ENCODE measurements at regions of chr2 and their contacts with region 1.

Region 1: DNA sequence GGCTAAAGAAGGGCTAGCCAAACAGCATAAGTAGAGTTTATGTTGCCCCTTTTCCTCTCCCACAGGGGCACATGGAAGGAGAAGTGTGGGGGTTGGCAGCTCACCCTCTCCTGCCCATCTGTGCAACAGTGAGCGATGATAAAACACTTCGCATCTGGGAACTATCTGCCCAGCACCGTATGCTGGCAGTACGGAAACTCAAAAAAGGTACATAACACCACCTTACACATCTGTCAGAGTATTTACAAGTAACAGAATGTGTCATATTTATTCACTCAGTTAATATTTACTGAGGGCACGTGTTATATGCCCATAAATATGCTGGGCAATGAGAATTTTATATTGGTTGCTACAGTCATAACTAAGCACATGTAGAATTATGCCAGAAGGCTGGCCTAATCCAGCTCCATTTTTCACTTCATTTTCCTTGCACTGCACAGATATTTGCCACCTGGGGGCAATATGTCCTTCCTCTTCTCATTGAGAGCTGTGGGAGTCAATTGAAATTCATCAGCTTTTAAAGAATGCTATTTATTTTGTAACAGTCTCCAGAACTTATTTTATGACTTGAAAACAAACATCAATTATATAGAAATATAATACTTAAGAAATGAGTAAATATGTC is 150.6 kb downstream of the RTN4 start:
- DNase-seq: peak; percentile 48
- H3K4me3 ChIP-seq: no peak overlapping the region
- H3K27ac ChIP-seq: no peak overlapping the region
- H3K4me1 ChIP-seq: peaks cover 10% of the 10 kb centered on the region
- H3K27me3 ChIP-seq: peaks cover 5 to 6% of the 10 kb centered on the region in 2 experiments
- CTCF ChIP-seq: peak; percentile 31 to 34
- POLR2A ChIP-seq: no peak

Region 2: GRCh38 chr2:54960164-54960563 is 60.5 kb after region 1 on chr2:
- CTCF ChIA-PET with region 1: interaction called, 14 read pairs
- POLR2A ChIA-PET with region 1: no interaction called
- dilution Hi-C with region 1: no loop called
- intact Hi-C with region 1: no loop called
- DNase-seq: no peak
- H3K4me3 ChIP-seq: no peak overlapping the region
- H3K27ac ChIP-seq: no peak overlapping the region
- H3K4me1 ChIP-seq: no peaks in the 10 kb centered on the region
- H3K27me3 ChIP-seq: no peaks in the 10 kb centered on the region
- CTCF ChIP-seq: no peak
- POLR2A ChIP-seq: no peak

Region 3: DNA sequence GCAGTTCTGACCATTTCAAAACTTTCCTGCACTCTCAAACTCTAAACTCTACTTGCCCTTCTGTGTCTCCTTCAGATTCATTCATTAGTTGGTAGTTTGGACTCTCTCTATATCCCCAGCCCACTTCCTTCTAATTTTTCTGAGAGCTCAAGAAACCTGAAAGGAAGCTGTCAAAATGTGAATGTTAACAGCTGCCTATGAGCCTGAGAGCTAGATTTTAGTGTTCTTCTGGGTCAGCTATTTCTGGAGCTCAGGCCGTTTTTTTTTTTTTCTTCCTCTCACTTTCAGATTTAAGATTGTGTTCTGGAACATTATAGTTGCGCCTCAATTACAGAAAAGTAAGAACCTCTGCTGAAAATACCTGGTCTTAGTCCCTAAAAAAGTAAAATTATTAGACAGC is 77.5 kb after region 1 on chr2:
- CTCF ChIA-PET with region 1: interaction called, 50 read pairs
- POLR2A ChIA-PET with region 1: no interaction called
- dilution Hi-C with region 1: no loop called
- intact Hi-C with region 1: no loop called
- DNase-seq: no peak
- H3K4me3 ChIP-seq: no peak overlapping the region
- H3K27ac ChIP-seq: no peak overlapping the region
- H3K4me1 ChIP-seq: no peaks in the 10 kb centered on the region
- H3K27me3 ChIP-seq: no peaks in the 10 kb centered on the region
- CTCF ChIP-seq: no peak
- POLR2A ChIP-seq: no peak

Region 4: DNA sequence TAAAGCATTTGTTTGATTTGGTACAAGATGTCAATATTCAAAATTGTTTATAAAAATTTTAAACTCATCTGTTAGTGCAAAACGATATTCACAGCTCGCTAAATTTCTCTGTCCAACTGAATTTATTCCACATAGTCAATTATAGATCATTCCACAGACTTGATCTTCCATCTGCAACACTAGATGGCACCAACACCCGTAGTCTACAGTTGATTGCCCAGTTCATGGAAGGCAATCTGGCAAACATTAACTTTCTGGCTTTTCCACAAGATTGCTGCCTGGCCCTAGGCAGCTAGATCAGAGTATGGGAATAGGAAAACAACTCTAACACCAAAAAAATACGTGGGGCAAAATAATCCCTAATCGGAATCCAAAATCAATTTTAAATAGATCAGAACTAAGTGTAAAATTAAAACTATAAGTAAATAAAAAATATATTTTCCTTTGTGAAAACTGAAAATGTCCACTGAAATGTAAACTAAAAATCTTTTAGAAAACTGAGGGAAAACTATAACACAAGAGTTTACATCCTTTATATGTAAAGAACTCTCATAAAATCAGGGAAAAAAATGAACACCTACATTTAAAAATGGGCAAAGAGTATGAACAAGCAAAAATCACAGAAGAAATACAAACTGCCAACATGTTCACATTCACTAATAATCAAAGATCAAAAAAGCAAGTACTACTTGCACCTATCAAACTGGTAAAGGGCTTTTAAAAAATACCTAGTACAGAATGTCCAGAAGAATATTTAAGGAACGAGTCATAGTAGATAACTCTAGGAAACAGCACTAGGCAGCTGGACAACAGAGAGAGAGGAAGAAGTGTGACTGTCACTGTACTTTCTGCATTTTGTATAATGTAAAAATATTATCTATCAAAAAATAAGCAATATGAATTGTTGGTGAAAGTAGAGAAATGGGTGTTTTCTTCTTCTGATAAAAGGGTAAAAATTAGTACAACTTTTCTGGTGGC is 115.6 kb after region 1 on chr2:
- CTCF ChIA-PET with region 1: interaction called, 24 read pairs
- POLR2A ChIA-PET with region 1: no interaction called
- dilution Hi-C with region 1: no loop called
- intact Hi-C with region 1: loop called (anchors 2 kb)
- DNase-seq: peak; percentile 72
- H3K4me3 ChIP-seq: no peak overlapping the region
- H3K27ac ChIP-seq: no peak overlapping the region
- H3K4me1 ChIP-seq: peaks cover 63% of the 10 kb centered on the region
- H3K27me3 ChIP-seq: no peaks in the 10 kb centered on the region
- CTCF ChIP-seq: peak; percentile 49
- POLR2A ChIP-seq: no peak

Region 5: DNA sequence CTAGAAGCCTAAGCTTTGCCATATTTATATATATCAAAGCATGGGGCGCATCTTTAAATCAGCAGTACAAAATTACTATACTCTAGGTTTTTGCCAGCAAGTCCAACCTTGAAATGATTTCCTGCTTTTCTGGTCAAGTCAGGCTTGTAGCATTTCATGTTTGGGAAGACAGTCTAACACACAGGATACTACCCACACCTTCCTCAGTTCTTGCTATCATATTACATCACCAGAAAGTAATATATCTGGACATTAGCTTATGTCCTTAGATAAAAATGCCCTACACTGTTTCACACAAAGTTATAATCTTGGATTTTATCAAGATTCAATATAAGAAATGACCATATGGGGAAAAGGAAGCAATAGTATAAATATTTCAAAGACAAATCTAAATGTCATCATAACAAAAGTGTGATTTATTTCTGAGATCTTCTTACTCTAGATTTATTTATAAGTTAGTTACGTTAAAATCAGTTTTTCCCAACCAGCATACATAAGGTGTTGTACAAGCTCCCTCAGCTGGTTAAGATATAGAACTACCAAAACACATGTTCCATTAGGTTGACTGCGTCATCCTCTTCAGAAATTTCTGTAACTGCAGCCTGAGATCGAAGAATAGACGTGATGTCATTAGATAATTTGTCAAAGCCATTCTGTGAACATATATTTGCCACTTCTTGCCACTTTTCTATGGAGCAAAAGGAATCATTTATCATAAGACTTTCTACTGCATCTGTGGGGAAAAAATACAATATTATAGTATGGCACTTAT is 275.8 kb after region 1 on chr2:
- CTCF ChIA-PET with region 1: interaction called, 198 read pairs
- POLR2A ChIA-PET with region 1: no interaction called
- dilution Hi-C with region 1: no loop called
- intact Hi-C with region 1: loop called (anchors 1 kb)
- DNase-seq: peak; percentile 70
- H3K4me3 ChIP-seq: no peak overlapping the region
- H3K27ac ChIP-seq: no peak overlapping the region
- H3K4me1 ChIP-seq: no peaks in the 10 kb centered on the region
- H3K27me3 ChIP-seq: no peaks in the 10 kb centered on the region
- CTCF ChIP-seq: peak; percentile 33 to 38
- POLR2A ChIP-seq: no peak